ENCODE measurements at regions of chr5 and their contacts with region 1.

Region 1: DNA sequence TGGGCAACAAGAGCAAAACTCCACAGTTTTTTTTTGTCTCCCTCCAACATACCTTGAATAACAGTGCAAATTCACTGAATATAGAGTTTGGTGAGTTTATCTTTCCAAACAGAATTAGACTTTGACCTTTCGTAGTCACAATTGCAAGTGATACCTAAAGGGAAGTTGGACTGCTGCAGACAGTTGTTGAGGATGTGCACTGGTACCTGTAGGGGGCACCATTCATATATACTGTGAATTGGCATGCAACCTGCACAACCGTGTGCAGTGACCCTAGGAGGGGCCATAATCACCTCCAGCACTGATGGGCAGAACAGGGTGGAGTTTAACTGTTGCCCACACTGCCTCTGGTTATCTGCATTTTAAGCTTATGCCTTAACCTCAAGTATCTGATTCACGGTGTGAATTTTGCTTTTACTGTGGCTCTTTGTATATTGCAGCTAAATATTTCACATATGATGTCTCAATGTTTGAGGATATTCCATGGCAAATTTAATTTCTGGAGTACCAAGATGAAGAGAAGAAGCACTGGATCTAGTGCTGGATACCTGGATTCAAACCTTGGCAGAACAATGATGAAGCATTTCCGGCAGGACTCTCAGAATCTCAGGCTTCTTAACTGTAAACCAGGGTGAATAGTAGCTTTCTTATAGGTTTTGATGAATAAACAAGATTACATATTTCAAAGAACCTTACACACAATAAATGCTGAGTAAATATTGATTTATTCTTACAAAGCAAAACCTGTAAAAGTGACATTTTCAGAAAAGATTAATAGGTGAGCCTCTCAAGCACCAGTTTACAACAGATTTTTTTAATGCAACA is 144.3 kb downstream of the ACTBL2 start:
- DNase-seq: peak; percentile 24
- H3K4me3 ChIP-seq: no peak overlapping the region
- H3K27ac ChIP-seq: no peak overlapping the region
- H3K4me1 ChIP-seq: peaks cover 3% of the 10 kb centered on the region
- H3K27me3 ChIP-seq: no peaks in the 10 kb centered on the region
- CTCF ChIP-seq: peak; percentile 66 to 69

Region 2: DNA sequence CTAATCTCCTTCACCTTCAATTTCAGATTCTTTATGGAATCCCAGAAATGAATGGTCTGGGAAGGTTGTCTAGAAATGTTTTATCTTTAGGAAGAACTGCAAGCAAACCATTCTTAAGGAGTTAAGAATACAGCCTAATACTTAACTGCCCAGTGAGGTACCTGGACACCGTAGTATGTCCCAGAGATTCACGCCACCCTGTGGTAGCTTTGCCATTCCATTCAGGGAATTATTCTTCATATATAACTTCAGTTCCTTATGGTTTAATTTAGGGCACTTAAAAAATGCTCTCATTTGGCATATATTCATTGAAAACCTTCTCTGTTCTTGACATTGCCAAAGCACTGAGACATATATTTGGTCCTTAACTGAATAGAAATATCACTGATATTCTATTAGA is 94.6 kb after region 1 on chr5:
- CTCF ChIA-PET with region 1: interaction called, 4 read pairs
- dilution Hi-C with region 1: no loop called
- in situ Hi-C with region 1: no loop called
- intact Hi-C with region 1: loop called (anchors 5 kb)
- DNase-seq: peak; percentile 20
- H3K4me3 ChIP-seq: no peak overlapping the region
- H3K27ac ChIP-seq: no peak overlapping the region
- H3K4me1 ChIP-seq: peaks cover 17% of the 10 kb centered on the region
- H3K27me3 ChIP-seq: peaks cover 9% of the 10 kb centered on the region
- CTCF ChIP-seq: peak; percentile 28 to 53

Region 3: DNA sequence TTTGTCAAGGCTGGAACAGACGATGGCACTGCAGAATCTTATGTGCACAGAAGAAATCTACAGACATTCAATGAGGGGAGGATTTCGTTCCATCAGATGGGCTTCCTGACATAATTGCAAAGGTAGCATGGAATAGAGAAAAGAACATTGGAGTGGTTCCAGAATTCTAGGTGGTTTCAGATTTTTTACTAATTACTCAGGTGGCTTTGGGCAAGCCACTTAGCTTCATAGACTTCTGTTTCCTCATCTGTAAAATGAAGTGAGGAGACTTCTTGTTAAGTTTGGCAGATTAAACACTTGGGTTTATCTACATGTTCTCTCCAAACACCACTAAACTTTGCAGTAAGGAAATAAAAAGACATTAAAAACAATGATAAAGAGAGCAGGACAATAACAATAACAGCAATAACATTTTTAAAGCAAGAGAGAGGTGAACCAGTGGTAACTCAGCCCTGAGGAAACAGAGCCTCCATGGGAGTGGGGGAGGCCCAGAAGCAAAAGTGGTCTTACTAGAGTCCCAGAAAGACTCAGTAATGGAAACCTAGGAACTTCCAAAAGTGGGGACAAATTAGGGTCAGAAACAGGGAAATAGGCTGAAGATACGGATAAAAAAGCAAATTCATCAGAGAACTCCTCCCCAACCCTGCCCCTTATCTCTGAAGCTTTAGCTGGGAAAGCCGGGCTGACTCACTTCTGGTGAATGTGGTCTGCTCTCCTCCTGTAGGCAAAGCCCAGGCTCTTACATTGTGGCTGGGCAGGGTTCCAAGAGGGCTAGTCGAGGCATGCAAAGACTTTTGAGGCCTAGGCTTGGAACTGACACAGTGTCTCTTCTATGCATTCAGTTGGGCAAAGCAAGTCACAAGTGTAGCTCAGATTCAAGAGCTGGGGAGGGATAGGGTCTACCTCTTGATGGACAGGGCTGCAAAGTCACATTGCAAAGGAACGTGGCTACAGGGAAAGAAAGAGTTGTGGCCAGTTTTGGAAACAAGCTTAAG is 156.1 kb after region 1 on chr5:
- CTCF ChIA-PET with region 1: no interaction called
- dilution Hi-C with region 1: no loop called
- in situ Hi-C with region 1: no loop called
- intact Hi-C with region 1: loop called (anchors 2 kb)
- DNase-seq: peak; percentile 97
- H3K4me3 ChIP-seq: peak overlapping the region in 1 of 3 experiments; percentile 30
- H3K27ac ChIP-seq: peak overlapping the region; percentile 80
- H3K4me1 ChIP-seq: peaks cover 40% of the 10 kb centered on the region
- H3K27me3 ChIP-seq: no peaks in the 10 kb centered on the region
- CTCF ChIP-seq: no peak

Measured in mammary epithelial cell (primary cell).